ENCODE measurements at regions of chr21 and their contacts with region 1.

Region 1: DNA sequence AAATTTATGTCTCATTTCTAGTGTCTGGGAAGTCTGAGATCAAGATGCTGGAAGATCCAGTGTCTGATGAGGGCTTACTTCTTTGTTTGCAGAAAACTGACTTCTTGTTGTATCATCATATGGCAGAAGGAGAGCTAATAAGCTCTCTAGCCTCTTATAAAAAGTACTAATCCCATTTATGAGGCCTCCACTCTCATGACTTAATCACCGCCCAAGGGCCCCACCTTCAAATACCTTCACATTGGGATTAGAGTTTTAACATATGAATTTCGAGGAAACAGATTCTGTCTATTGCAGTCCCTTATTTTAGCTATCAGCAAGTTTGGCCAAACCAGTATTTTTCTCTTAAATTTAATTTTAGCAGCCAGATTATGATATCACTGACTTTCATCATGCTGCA is 150.2 kb upstream of the TMPRSS15 start:
- DNase-seq: no peak
- ATAC-seq: no peak
- H3K4me3 ChIP-seq: no peak overlapping the region
- H3K4me3 Mint-ChIP-seq: no peak overlapping the region
- H3K27ac ChIP-seq: no peak overlapping the region
- H3K27ac Mint-ChIP-seq: no peak overlapping the region
- H3K4me1 ChIP-seq: no peaks in the 10 kb centered on the region
- H3K4me1 Mint-ChIP-seq: no peaks in the 10 kb centered on the region
- H3K27me3 ChIP-seq: no peaks in the 10 kb centered on the region
- H3K27me3 Mint-ChIP-seq: no peaks in the 10 kb centered on the region
- CTCF ChIP-seq: no peak

Region 2: GRCh38 chr21:18608226-18608625 is 54.4 kb after region 1 on chr21:
- CTCF ChIA-PET with region 1: no interaction called
- POLR2A ChIA-PET with region 1: no interaction called
- intact Hi-C with region 1: loop called in 1 of 2 experiments (anchors 10 kb)
- DNase-seq: no peak
- ATAC-seq: no peak
- H3K4me3 ChIP-seq: no peak overlapping the region
- H3K4me3 Mint-ChIP-seq: no peak overlapping the region
- H3K27ac ChIP-seq: no peak overlapping the region
- H3K27ac Mint-ChIP-seq: no peak overlapping the region
- H3K4me1 ChIP-seq: no peaks in the 10 kb centered on the region
- H3K4me1 Mint-ChIP-seq: no peaks in the 10 kb centered on the region
- H3K27me3 ChIP-seq: no peaks in the 10 kb centered on the region
- H3K27me3 Mint-ChIP-seq: no peaks in the 10 kb centered on the region
- CTCF ChIP-seq: no peak

Region 3: DNA sequence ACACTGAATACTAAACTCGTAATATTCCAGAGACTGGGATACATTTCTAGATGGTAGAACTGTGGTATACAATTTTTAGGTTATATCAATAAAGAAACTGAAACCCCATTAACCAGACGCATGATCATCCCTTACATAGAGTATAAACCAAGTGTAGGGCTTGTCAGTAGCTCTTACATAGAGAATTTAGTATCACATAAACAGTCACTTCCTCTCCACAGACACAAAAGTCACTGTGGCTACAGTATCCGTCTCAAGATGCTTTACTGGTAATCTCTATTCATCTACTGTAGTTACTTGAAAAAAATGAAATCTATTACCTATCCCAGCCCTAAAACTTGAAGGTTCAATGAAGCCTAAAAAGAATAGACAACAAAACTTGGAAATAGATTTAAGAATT is 102.1 kb after region 1 on chr21:
- CTCF ChIA-PET with region 1: no interaction called
- POLR2A ChIA-PET with region 1: no interaction called
- intact Hi-C with region 1: no loop called
- DNase-seq: no peak
- ATAC-seq: no peak
- H3K4me3 ChIP-seq: no peak overlapping the region
- H3K4me3 Mint-ChIP-seq: no peak overlapping the region
- H3K27ac ChIP-seq: no peak overlapping the region
- H3K27ac Mint-ChIP-seq: no peak overlapping the region
- H3K4me1 ChIP-seq: no peaks in the 10 kb centered on the region
- H3K4me1 Mint-ChIP-seq: no peaks in the 10 kb centered on the region
- H3K27me3 ChIP-seq: no peaks in the 10 kb centered on the region
- H3K27me3 Mint-ChIP-seq: no peaks in the 10 kb centered on the region
- CTCF ChIP-seq: no peak

Measured in CD8-positive, alpha-beta T cell (primary cell).